Dendritic cell treated with granulocyte-macrophage colony-stimulating factor and Interleukin-4, amounts not matched to agents 40 ng/mL and 50 ng/mL, for 4 days (primary cell): ENCODE measurements at regions of chr17 and their contacts with region 1.

Region 1: DNA sequence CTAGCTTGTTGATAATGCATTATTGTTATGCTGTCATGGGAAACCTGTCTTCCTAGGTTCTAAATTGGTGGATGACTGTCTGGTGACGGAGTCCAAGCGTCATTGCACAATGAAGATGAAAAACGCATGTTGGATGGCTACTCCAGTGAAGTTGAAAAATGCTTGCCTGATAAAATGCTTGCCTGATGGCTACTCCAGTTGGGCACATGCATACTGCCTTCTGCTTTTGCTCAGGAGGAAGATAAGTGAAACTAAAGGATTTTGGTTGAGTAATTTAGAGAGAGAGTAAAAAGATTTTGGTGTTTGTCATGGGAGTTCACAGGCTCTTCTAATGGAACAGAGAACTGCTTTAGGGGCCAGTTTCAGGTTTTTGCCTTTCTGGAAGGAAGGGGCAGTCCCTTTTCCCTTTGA is 118.6 kb downstream of the PRKCA start:
- H3K4me3 Mint-ChIP-seq: no peak overlapping the region
- H3K27ac Mint-ChIP-seq: peak overlapping the region; percentile 20
- H3K4me1 Mint-ChIP-seq: peaks cover 23% of the 10 kb centered on the region
- H3K27me3 Mint-ChIP-seq: no peaks in the 10 kb centered on the region

Region 2: GRCh38 chr17:66383333-66383732 is 37.6 kb before region 1 on chr17:
- intact Hi-C with region 1: no loop called
- H3K4me3 Mint-ChIP-seq: no peak overlapping the region
- H3K27ac Mint-ChIP-seq: no peak overlapping the region
- H3K4me1 Mint-ChIP-seq: peaks cover 8% of the 10 kb centered on the region
- H3K27me3 Mint-ChIP-seq: no peaks in the 10 kb centered on the region

Region 3: GRCh38 chr17:66441101-66441661 is 20.2 kb after region 1 on chr17:
- intact Hi-C with region 1: loop called (anchors 2 kb)
- H3K4me3 Mint-ChIP-seq: peak overlapping the region; percentile 68
- H3K27ac Mint-ChIP-seq: peak overlapping the region; percentile 75
- H3K4me1 Mint-ChIP-seq: peaks cover 63% of the 10 kb centered on the region
- H3K27me3 Mint-ChIP-seq: no peaks in the 10 kb centered on the region